ENCODE measurements at regions of chr9 and their contacts with region 1.

Region 1: DNA sequence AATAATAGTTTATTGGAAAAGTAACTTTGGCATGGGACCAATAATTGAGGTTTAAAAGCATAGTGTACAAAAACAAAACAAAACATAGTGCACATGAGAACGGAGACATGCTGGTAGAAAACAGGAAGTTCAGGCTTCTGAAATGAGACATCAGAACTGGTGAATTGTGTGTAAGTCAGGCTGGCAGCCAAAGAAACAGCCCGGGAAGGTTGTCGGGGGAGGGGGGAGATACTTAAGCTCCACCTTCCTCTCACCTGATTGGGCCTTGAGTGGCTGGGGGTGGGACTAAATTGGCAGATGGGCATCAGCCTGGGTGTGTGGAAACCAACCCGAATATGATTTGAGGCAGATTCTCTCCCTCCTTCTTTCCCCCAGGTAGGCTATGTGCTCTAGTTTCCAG is 256.3 kb downstream of the SMARCA2 start:
- ATAC-seq: no peak
- H3K4me3 ChIP-seq: no peak overlapping the region
- H3K27ac ChIP-seq: no peak overlapping the region
- H3K4me1 ChIP-seq: peaks cover 12 to 28% of the 10 kb centered on the region in 2 donors

Region 2: GRCh38 chr9:2158111-2158610 is 113.3 kb before region 1 on chr9:
- in situ Hi-C with region 1: loop called in 1 of 9 experiments (anchors 25 kb)
- ATAC-seq: peak; percentile 37 to 69 (median 49)
- H3K4me3 ChIP-seq: peak overlapping the region; percentile 12 to 35 (median 26)
- H3K27ac ChIP-seq: peak overlapping the region; percentile 41 to 83
- H3K4me1 ChIP-seq: peaks cover 29 to 43% of the 10 kb centered on the region in 2 donors

Region 3: DNA sequence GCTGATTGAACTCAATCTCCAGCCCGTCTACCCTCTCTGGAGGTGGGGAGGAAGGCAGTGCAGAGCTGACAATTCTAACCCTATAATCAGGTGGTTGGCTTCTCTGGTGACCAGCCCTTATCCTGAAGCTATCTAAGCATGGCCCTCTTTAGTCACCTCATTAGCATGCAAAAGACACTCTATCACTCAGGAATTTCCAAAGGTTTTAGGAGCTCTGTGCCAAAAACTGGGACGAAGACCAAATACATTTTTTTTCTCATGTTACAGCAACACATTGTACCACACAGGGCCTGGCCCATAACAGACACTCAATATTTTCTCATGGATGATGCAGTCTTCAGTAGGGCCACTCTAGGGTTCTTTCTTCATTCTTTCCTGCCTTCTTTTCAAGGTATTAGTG is 231.3 kb after region 1 on chr9:
- in situ Hi-C with region 1: no loop called
- ATAC-seq: peak in 2 of 8 experiments; percentile 83 to 85
- H3K4me3 ChIP-seq: no peak overlapping the region
- H3K27ac ChIP-seq: no peak overlapping the region
- H3K4me1 ChIP-seq: no peaks in the 10 kb centered on the region

Measured in motor neuron (in vitro differentiated cells).